Gastrocnemius medialis (tissue), 4 donors: ENCODE measurements at regions of chr20 and their contacts with region 1.

Region 1: DNA sequence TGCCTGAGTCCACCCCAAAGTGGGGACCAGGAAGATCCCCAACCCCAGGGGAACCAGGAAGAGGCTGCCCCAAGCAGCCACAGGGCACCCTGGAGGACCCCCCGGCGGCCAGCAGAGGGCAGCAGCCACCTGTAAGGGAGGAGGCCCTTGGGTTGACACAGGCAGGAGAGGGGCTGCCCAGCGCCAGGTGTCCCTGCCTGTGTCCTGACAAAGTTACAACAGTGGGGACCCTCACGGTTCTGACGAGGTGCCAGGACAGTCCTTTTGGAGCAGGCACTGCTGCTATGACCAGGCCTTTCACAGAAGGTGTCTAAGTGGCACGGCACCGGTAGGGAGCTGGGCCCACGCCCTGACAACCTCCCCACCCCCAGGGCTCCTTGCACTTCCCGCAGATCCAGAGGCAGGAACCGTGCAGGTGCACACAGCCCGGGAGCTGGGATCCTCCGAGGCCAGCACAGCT is 176.7 kb downstream of the BMP7 start:
- DNase-seq: no peak
- ATAC-seq: no peak
- H3K4me3 ChIP-seq: no peak overlapping the region
- H3K27ac ChIP-seq: no peak overlapping the region
- H3K4me1 ChIP-seq: no peaks in the 10 kb centered on the region
- H3K27me3 ChIP-seq: no peaks in the 10 kb centered on the region
- CTCF ChIP-seq: peak; percentile 20 to 68 (median 62)
- POLR2A ChIP-seq: no peak

Region 2: DNA sequence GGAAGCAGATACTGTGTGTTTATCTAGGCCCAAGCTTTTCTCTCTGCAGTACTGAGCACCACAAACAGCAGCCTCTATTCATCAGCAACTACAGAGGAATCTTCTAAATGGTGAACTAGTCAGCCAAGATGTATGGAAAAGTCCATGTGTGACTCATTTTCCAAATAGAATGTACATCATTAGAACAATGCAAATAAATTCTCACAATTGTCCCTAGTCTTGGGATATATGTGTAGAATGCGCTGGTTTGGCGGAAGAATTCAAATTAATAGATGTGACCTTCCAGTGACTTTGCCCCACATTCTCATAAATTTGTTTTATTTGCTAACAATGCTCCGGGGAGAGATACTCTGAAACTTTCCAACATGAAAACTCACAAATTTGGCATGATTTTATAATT is 1520.6 kb before region 1 on chr20:
- in situ Hi-C with region 1: no loop called
- intact Hi-C with region 1: no loop called
- DNase-seq: no peak
- ATAC-seq: no peak
- H3K4me3 ChIP-seq: no peak overlapping the region
- H3K27ac ChIP-seq: no peak overlapping the region
- H3K4me1 ChIP-seq: no peaks in the 10 kb centered on the region
- H3K27me3 ChIP-seq: no peaks in the 10 kb centered on the region
- CTCF ChIP-seq: no peak
- POLR2A ChIP-seq: no peak

Region 3: GRCh38 chr20:57342829-57343228 is 253.1 kb after region 1 on chr20:
- in situ Hi-C with region 1: loop called (anchors 10 to 25 kb)
- intact Hi-C with region 1: loop called (anchors 1 kb)
- DNase-seq: no peak
- ATAC-seq: no peak
- H3K4me3 ChIP-seq: no peak overlapping the region
- H3K27ac ChIP-seq: no peak overlapping the region
- H3K4me1 ChIP-seq: no peaks in the 10 kb centered on the region
- H3K27me3 ChIP-seq: peaks cover 0 to 4% (median 0%) of the 10 kb centered on the region in 3 donors
- CTCF ChIP-seq: no peak
- POLR2A ChIP-seq: no peak